ENCODE measurements at regions of chr4 and their contacts with region 1.

Region 1: GRCh38 chr4:122914292-122914904 is 8.0 kb downstream of the NUDT6 start:
- DNase-seq: no peak
- H3K4me3 ChIP-seq: no peak overlapping the region
- H3K27me3 ChIP-seq: no peaks in the 10 kb centered on the region
- CTCF ChIP-seq: peak; percentile 47

Region 2: GRCh38 chr4:122716825-122717448 is 197.5 kb before region 1 on chr4:
- CTCF ChIA-PET with region 1: interaction called, 10 read pairs
- POLR2A ChIA-PET with region 1: no interaction called
- DNase-seq: no peak
- H3K4me3 ChIP-seq: no peak overlapping the region
- H3K27me3 ChIP-seq: no peaks in the 10 kb centered on the region
- CTCF ChIP-seq: peak; percentile 91

Region 3: GRCh38 chr4:122758033-122758432 is 156.4 kb before region 1 on chr4:
- CTCF ChIA-PET with region 1: interaction called, 54 read pairs
- POLR2A ChIA-PET with region 1: interaction called, 5 read pairs
- DNase-seq: no peak
- H3K4me3 ChIP-seq: no peak overlapping the region
- H3K27me3 ChIP-seq: no peaks in the 10 kb centered on the region
- CTCF ChIP-seq: peak; percentile 59

Region 4: GRCh38 chr4:122842984-122843531 is 71.3 kb before region 1 on chr4:
- CTCF ChIA-PET with region 1: no interaction called
- POLR2A ChIA-PET with region 1: no interaction called
- DNase-seq: no peak
- H3K4me3 ChIP-seq: no peak overlapping the region
- H3K27me3 ChIP-seq: no peaks in the 10 kb centered on the region
- CTCF ChIP-seq: no peak

Region 5: DNA sequence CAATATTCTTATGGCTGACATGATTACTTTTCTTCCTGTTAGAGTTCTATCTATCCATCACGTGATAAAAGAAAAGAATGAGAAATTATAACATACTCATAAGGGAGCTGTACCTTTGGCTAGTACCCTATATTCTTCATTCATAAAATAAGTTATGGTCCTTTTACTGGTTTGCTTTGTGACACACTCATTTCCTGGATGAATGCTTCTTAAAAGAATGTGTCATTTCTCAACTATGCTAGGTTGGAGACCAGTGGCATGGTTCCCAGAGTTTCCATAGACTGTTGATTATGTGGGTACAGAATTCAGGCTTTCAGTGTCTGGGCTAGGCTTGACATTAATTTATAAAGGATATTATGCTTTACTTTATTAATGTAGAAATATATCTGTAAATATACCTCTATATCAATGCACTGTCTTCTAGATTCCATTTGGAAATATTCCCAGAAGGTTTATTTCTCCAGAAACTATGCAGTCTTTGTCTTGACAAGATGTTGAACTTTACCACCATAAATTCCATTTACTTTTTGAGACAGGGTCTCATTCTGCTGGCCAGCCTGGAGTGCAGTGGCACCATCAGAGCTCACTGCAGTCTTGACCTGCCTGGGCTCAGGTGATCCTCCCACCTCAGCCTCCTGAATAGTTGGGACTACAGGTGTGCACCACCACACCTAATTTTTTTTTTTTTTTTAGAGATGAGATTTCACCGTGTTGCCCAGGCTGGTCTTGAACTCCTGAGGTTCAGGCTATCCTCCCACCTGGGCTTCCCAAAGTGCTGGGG is 15.8 kb before region 1 on chr4:
- CTCF ChIA-PET with region 1: interaction called, 15 read pairs
- POLR2A ChIA-PET with region 1: interaction called, 4 read pairs
- DNase-seq: peak; percentile 70
- H3K4me3 ChIP-seq: no peak overlapping the region
- H3K27me3 ChIP-seq: no peaks in the 10 kb centered on the region
- CTCF ChIP-seq: no peak

Region 6: DNA sequence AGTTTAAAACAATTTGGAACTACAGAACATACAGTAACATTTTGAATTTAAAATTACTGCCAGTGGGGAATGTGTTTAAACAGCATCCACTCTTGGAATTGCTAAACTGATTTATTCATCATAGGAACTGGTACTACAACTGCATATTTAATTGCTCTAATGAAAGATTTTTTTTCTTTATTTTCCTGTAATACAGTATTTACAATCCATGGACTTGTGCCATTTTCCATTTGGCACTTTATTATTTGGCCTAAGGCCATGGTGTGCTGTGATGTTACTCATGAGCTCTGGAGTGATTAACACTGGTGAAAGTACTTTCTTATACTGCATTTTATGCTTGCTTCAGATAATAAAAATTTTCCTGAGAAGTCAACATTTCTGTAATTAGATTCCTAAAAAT is 77.7 kb after region 1 on chr4:
- CTCF ChIA-PET with region 1: no interaction called
- POLR2A ChIA-PET with region 1: no interaction called
- DNase-seq: no peak
- H3K4me3 ChIP-seq: no peak overlapping the region
- H3K27me3 ChIP-seq: no peaks in the 10 kb centered on the region
- CTCF ChIP-seq: no peak

Measured in BJ (cell line).